HCT116 (cell line): ENCODE measurements at regions of chr10 and their contacts with region 1.

Region 1: DNA sequence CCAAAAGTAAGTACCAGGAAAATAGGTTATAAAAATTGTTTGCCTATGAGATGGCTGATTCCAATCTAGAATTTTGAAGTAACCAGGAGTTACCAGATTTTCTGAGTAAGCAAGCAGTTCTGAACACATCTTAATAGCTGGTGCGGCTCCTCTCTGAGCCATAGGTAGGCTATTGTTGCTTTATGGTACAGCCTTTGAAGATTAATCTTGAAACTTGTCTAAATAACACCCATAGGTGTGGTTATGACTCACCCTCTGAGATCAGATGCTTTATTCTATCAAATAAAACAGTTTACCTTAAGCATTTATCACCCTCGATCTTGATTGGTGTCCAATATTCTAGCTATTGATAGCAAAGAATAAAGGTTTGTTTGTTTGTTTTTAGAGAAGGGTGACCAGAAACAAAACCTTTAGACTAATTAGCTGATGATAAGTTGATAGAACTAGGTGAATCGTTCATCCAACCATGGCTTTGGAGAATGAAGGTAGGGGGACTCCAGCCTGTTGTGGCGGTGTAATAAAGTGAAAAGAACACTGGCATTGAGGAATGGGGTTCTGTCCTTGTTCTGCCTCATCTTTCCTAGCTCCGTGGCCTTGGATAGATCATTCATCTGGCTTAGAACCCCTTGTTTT is 72.2 kb downstream of the VTI1A start:
- DNase-seq: peak; percentile 100
- ATAC-seq: peak; percentile 76
- H3K4me3 ChIP-seq: peak overlapping the region in 1 of 2 experiments; percentile 23; a peak in 2 of 4 replicates
- H3K27ac ChIP-seq: peak overlapping the region; percentile 94
- H3K4me1 ChIP-seq: peaks cover 86 to 100% of the 10 kb centered on the region in 2 experiments
- H3K27me3 ChIP-seq: no peaks in the 10 kb centered on the region
- CTCF ChIP-seq: no peak
- POLR2A ChIP-seq: no peak
- RAD21 ChIP-seq: no peak

Region 2: DNA sequence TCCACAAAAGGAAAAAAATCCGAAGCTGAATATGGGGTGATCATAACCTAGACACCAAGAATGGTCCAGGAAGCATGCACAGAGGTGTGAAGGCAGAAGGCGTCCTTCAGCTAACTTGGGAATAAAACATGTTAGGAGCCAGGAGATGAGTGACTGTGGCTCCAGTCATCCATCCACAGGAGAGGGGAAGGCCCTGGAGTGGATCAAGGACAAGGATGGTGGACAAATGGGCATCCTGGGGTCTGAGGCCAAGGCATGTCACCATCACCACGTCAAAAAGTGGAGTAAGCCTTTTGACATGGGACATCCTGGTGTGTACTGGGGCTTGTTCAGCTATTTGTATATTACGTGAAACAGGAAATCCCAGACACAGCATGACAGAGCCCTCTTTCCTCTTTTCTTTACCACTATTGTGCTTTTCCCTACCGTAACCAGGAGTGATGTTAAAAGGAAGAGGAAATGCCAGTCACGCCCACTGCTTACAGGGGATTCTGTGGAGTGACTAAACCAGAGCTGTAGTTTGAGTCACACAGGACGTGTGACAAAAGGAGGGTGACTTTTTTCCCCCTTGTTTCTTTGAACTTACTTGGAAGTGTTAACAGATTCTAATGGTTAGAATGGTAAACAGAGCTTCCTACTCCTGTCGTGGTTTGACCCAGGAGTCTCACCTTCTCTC is 130.0 kb before region 1 on chr10:
- CTCF ChIA-PET with region 1: no interaction called
- POLR2A ChIA-PET with region 1: interaction called, 5 read pairs
- RAD21 ChIA-PET with region 1: no interaction called
- intact Hi-C with region 1: loop called (anchors 5 kb)
- DNase-seq: peak; percentile 99
- ATAC-seq: peak; percentile 83
- H3K4me3 ChIP-seq: 0 out of 4 replicates have a peak overlapping the region, but pooled peaks of 1 of the 2 experiments have one; percentile 7
- H3K27ac ChIP-seq: peak overlapping the region; percentile 77
- H3K4me1 ChIP-seq: peaks cover 94 to 97% of the 10 kb centered on the region in 2 experiments
- H3K27me3 ChIP-seq: no peaks in the 10 kb centered on the region
- CTCF ChIP-seq: no peak
- POLR2A ChIP-seq: no peak
- RAD21 ChIP-seq: no peak

Region 3: GRCh38 chr10:112490545-112490944 is 28.7 kb before region 1 on chr10:
- CTCF ChIA-PET with region 1: no interaction called
- POLR2A ChIA-PET with region 1: interaction called, 44 read pairs
- RAD21 ChIA-PET with region 1: interaction called, 3 to 4 read pairs
- intact Hi-C with region 1: loop called (anchors 2 kb)
- DNase-seq: peak; percentile 97
- ATAC-seq: peak; percentile 80
- H3K4me3 ChIP-seq: peak overlapping the region in 1 of 2 experiments; percentile 5; a peak in 1 of 4 replicates
- H3K27ac ChIP-seq: peak overlapping the region; percentile 86
- H3K4me1 ChIP-seq: peaks cover 94 to 99% of the 10 kb centered on the region in 2 experiments
- H3K27me3 ChIP-seq: no peaks in the 10 kb centered on the region
- CTCF ChIP-seq: no peak
- POLR2A ChIP-seq: no peak
- RAD21 ChIP-seq: no peak; the same call in 1 of the 2 replicates

Region 4: GRCh38 chr10:112507046-112507445 is 12.2 kb before region 1 on chr10:
- CTCF ChIA-PET with region 1: interaction called, 3 read pairs
- POLR2A ChIA-PET with region 1: interaction called, 37 read pairs
- RAD21 ChIA-PET with region 1: interaction called in 1 of 2 experiments, 3 read pairs
- intact Hi-C with region 1: no loop called
- DNase-seq: no peak
- ATAC-seq: peak; percentile 26; the same call in 1 of the 2 replicates
- H3K4me3 ChIP-seq: no peak overlapping the region
- H3K27ac ChIP-seq: peak overlapping the region; percentile 72
- H3K4me1 ChIP-seq: peaks cover 57 to 76% of the 10 kb centered on the region in 2 experiments
- H3K27me3 ChIP-seq: no peaks in the 10 kb centered on the region
- CTCF ChIP-seq: no peak
- POLR2A ChIP-seq: no peak
- RAD21 ChIP-seq: no peak

Region 5: GRCh38 chr10:112532189-112532588 is 12.9 kb after region 1 on chr10:
- CTCF ChIA-PET with region 1: interaction called, 9 read pairs
- POLR2A ChIA-PET with region 1: interaction called, 53 read pairs
- RAD21 ChIA-PET with region 1: interaction called in 1 of 2 experiments, 6 read pairs
- intact Hi-C with region 1: no loop called
- DNase-seq: no peak
- ATAC-seq: no peak
- H3K4me3 ChIP-seq: peak overlapping the region; percentile 24 to 52
- H3K27ac ChIP-seq: peak overlapping the region; percentile 90
- H3K4me1 ChIP-seq: peaks cover 92 to 99% of the 10 kb centered on the region in 2 experiments
- H3K27me3 ChIP-seq: no peaks in the 10 kb centered on the region
- CTCF ChIP-seq: no peak
- POLR2A ChIP-seq: no peak
- RAD21 ChIP-seq: no peak

Region 6: GRCh38 chr10:112593023-112593422 is 73.8 kb after region 1 on chr10:
- CTCF ChIA-PET with region 1: no interaction called
- POLR2A ChIA-PET with region 1: no interaction called
- RAD21 ChIA-PET with region 1: no interaction called
- intact Hi-C with region 1: no loop called
- DNase-seq: no peak
- ATAC-seq: no peak
- H3K4me3 ChIP-seq: no peak overlapping the region
- H3K27ac ChIP-seq: no peak overlapping the region
- H3K4me1 ChIP-seq: no peaks in the 10 kb centered on the region
- H3K27me3 ChIP-seq: no peaks in the 10 kb centered on the region
- CTCF ChIP-seq: no peak
- POLR2A ChIP-seq: no peak
- RAD21 ChIP-seq: no peak

Region 7: GRCh38 chr10:112649006-112649821 is 130.0 kb after region 1 on chr10:
- CTCF ChIA-PET with region 1: no interaction called
- POLR2A ChIA-PET with region 1: no interaction called
- RAD21 ChIA-PET with region 1: no interaction called
- intact Hi-C with region 1: no loop called
- DNase-seq: no peak
- ATAC-seq: peak; percentile 28
- H3K4me3 ChIP-seq: no peak overlapping the region
- H3K27ac ChIP-seq: no peak overlapping the region
- H3K4me1 ChIP-seq: peaks cover 13 to 20% of the 10 kb centered on the region in 2 experiments
- H3K27me3 ChIP-seq: no peaks in the 10 kb centered on the region
- CTCF ChIP-seq: no peak
- POLR2A ChIP-seq: no peak
- RAD21 ChIP-seq: no peak